CD8-positive, alpha-beta T cell (primary cell): ENCODE measurements at regions of chr10 and their contacts with region 1.

Region 1: GRCh38 chr10:115129752-115130151 is 36.6 kb downstream of the ATRNL1 start:
- DNase-seq: peak in 2 of 9 experiments; percentile 24 to 40
- ATAC-seq: no peak
- H3K4me3 ChIP-seq: no peak overlapping the region
- H3K4me3 Mint-ChIP-seq: no peak overlapping the region
- H3K27ac ChIP-seq: no peak overlapping the region
- H3K27ac Mint-ChIP-seq: no peak overlapping the region
- H3K4me1 ChIP-seq: no peaks in the 10 kb centered on the region
- H3K4me1 Mint-ChIP-seq: no peaks in the 10 kb centered on the region
- H3K27me3 ChIP-seq: no peaks in the 10 kb centered on the region
- H3K27me3 Mint-ChIP-seq: peaks cover 5% of the 10 kb centered on the region
- CTCF ChIP-seq: peak; percentile 25

Region 2: DNA sequence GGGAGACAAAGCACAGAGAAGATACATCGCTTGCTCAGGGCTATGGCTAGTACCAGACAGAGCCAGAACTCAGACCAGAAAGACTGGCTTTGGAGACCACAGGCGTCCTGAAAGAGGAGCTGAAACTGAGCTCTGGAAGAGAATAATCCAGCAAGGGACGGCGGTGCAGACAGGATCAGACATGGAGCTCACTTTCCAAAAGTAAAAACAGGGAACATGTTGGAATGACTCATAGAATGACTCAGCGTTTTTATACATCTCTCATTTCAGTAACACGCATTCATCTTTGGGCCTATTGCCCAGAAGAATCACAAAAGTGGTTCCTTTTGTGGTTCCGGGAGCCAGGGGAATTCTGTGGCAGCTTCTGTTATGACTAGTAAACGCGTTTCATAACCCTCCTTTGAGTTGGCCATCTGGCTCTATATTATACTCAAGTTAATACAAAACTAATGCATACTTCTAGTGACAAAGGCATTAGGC is 1341.1 kb before region 1 on chr10:
- CTCF ChIA-PET with region 1: no interaction called
- POLR2A ChIA-PET with region 1: no interaction called
- intact Hi-C with region 1: loop called in 1 of 2 experiments (anchors 10 kb)
- DNase-seq: peak in 1 of 9 experiments; percentile 4
- ATAC-seq: no peak
- H3K4me3 ChIP-seq: no peak overlapping the region
- H3K4me3 Mint-ChIP-seq: no peak overlapping the region
- H3K27ac ChIP-seq: no peak overlapping the region
- H3K27ac Mint-ChIP-seq: no peak overlapping the region
- H3K4me1 ChIP-seq: no peaks in the 10 kb centered on the region
- H3K4me1 Mint-ChIP-seq: no peaks in the 10 kb centered on the region
- H3K27me3 ChIP-seq: no peaks in the 10 kb centered on the region
- H3K27me3 Mint-ChIP-seq: peaks cover 14% of the 10 kb centered on the region
- CTCF ChIP-seq: no peak

Region 3: GRCh38 chr10:114876602-114877300 is 253.0 kb before region 1 on chr10:
- CTCF ChIA-PET with region 1: no interaction called
- POLR2A ChIA-PET with region 1: no interaction called
- intact Hi-C with region 1: loop called in 1 of 2 experiments (anchors 10 kb)
- DNase-seq: peak in 4 of 9 experiments; percentile 2 to 42 (median 18)
- ATAC-seq: no peak
- H3K4me3 ChIP-seq: no peak overlapping the region
- H3K4me3 Mint-ChIP-seq: no peak overlapping the region
- H3K27ac ChIP-seq: no peak overlapping the region
- H3K27ac Mint-ChIP-seq: no peak overlapping the region
- H3K4me1 ChIP-seq: no peaks in the 10 kb centered on the region
- H3K4me1 Mint-ChIP-seq: peaks cover 10% of the 10 kb centered on the region
- H3K27me3 ChIP-seq: peaks cover 0 to 2% of the 10 kb centered on the region in 2 experiments
- H3K27me3 Mint-ChIP-seq: peaks cover 38% of the 10 kb centered on the region
- CTCF ChIP-seq: peak; percentile 36